ENCODE measurements at regions of chr20 and their contacts with region 1.

Region 1: DNA sequence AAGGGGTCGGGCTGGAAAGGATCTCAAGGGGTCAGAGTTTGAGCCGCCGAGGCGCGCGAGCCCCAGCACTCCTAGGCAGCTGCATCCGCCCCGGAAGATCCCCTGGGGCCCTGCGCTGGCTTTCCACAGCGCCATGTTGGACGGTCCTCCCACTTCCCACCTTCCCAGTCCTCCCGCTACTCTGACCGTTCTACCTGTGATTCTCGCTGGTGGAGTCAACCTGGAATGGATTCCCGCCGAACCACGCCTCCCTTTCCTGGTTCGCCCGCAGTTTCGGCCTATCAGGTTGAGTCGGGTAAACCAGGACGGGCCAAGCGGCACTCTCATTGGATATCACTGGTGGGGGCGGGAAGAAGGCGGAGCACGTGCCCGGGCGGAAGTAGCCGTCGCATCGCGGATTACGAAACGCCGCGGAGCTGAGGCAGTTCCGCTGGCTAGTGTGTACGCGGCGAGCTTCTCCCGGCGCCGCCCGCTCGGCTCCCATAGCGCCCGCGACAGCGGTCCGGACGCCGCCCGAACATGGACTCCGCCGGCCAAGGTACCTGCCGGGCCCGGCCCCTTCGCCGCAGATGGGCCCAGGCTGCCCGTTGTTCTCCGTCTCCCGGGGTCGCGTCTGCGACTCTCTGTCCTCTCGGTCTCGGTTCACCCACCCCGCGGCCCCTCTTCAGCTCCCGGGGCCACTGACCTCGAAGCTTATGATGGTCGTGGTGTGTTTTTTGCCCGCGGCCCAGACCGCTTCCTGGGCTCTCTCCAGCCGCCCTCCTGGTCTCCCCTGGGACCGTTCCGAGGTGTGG is at the start of gene TPD52L2:
- DNase-seq: peak; percentile 98 to 99 (median 99)
- ATAC-seq: peak; percentile 94 to 96 (median 95)
- H3K4me3 ChIP-seq: peak within 1 kb of the TSS; percentile 73 to 99 (median 82)
- H3K27ac ChIP-seq: peak within 1 kb of the TSS; percentile 86 to 98 (median 94)
- H3K4me1 ChIP-seq: peaks cover 8 to 55% (median 25%) of the 10 kb centered on the region in 12 donors
- H3K27me3 ChIP-seq: no peaks in the 10 kb centered on the region
- CTCF ChIP-seq: peak in 1 of 12 donors; percentile 3
- POLR2A ChIP-seq: peak; percentile 24 to 89
- total RNA-seq, gene TPD52L2: 65.0 to 122 (median 72.2) TPM

Region 2: DNA sequence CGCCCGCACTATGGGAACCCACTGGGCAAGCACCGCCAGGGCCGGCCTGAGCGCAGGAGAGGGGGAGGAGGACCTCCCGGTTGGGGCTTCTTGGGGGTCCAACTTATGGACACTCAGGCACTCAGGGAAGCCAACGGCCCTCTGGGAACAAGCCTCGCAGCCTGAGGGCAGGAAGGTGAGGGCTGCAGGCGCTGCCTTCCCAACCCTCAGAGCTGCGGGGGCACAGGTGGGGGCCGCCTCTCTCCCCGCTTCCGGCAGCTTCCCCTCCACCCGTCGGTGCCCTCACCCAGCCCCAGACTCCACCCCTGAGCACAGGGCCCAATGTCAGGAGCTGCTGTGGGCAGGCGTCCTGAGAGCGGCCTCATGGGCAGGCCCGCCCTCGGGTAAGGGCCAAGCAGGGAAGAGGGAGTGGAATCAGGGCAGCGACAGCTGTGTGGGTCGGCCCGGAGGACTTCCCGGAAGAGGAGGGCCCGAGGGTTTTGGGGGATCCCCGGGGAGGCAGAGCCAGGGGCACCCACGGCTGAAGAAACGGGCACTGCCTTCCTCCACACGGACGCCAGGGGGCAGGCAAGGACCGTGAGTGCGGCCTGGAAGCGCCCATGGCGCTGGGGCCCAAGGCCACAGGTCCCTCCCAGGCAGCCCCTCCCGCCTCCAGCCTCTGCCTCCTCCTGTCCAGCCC is 327.4 kb before region 1 on chr20:
- intact Hi-C with region 1: loop called in 7 of 10 experiments (anchors 2 to 10 kb)
- DNase-seq: peak; percentile 80 to 95 (median 87)
- ATAC-seq: peak; percentile 84 to 90 (median 87)
- H3K4me3 ChIP-seq: peak overlapping the region in 10 of 12 donors; percentile 15 to 51 (median 38)
- H3K27ac ChIP-seq: peak overlapping the region in 7 of 12 donors; percentile 12 to 91 (median 39)
- H3K4me1 ChIP-seq: peaks cover 0 to 28% (median 13%) of the 10 kb centered on the region in 12 donors
- H3K27me3 ChIP-seq: peaks cover 0 to 41% (median 2%) of the 10 kb centered on the region in 9 donors
- CTCF ChIP-seq: peak; percentile 94 to 98 (median 96)
- POLR2A ChIP-seq: no peak

Region 3: DNA sequence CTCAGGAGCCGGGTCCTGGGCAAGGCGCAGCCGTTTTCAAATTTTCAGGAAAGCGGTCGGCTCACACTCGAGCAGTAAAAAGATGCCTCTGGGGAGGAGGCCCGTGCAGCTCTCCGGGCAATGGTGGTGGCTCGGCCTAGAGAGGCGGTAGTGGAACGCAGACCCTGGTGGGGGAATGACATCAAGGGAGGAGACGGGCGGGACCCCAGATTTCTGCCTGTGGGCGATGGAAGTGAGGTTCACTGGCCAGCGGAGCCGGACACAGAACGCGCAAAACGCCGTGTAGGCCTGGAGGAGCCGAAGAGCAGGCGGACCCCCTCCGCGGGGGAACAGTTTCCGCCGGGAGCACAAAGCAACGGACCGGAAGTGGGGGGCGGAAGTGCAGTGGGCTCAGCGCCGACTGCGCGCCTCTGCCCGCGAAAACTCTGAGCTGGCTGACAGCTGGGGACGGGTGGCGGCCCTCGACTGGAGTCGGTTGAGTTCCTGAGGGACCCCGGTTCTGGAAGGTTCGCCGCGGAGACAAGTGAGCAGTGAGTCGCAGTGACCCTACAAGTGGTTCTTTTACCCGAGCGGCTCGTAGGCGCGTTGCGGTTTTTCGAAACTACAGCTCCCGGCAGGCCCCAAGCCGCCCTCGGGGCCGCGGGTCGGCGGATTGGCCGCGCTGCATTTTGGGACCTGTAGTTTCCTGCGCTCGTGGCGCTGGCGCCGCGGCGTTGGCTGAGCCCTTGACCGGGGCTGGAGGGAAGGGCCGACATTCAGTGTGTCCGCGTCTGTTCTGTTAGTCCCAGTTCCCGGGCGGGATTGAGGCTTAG is 206.9 kb before region 1 on chr20 and contains the start of gene RTEL1:
- intact Hi-C with region 1: loop called in 1 of 10 experiments (anchors 10 kb)
- DNase-seq: peak; percentile 94 to 96 (median 95)
- ATAC-seq: peak; percentile 91 to 97 (median 96)
- H3K4me3 ChIP-seq: peak within 1 kb of the TSS; percentile 61 to 91 (median 78)
- H3K27ac ChIP-seq: peak within 1 kb of the TSS; percentile 65 to 98 (median 89)
- H3K4me1 ChIP-seq: peaks cover 3 to 33% (median 21%) of the 10 kb centered on the region in 12 donors
- H3K27me3 ChIP-seq: peaks cover 0 to under 1% (median 0%) of the 10 kb centered on the region in 9 donors
- CTCF ChIP-seq: peak in 1 of 12 donors; percentile 10
- POLR2A ChIP-seq: peak in 1 of 2 donors; percentile 35
- total RNA-seq, gene RTEL1: 3.0 to 17.8 (median 10.1) TPM

Region 4: DNA sequence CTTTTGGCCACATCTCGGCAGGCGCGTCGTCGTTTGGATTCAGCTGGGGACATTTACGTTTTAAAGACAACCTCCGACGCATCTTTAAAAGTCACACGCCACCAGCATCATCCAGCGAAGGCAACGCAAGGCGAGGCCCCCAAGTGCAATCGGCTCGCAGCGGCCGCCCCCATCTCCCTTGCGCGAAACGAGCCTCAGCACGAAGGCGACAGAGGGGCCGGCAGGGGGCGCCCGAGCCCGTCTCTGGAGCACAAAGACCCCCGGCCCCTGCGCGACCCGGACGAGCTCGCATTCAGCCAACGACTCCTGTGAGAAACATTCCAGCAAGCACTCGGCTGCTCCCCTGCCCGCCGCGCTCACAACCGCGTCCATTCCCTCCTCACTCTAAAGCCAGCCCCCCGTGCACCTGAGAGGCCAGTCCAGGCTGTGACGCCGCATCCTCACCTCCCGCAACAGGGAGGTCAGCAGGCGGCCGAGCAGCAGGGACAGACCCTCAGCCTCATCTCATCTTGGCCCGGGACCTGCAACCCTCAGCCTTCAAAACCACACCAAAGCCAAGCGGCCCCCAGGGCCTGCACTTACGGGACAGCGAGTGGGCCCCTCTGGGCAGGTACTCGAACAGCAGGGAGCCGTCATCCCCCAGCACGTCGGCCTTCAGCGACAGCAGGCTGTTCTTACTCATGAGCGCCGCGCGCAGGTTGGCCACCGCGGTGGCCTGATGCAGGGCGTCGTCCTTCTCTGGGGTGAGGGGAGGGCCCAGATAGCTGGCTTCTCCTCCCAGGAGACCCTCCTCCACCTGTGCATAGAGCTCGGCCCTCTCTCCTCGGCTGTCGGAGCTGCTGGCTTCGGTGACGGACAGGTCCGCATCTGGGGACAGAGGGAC is 89.7 kb before region 1 on chr20:
- intact Hi-C with region 1: loop called in 1 of 10 experiments (anchors 5 kb)
- DNase-seq: peak in 2 of 5 donors; percentile 44 to 69
- ATAC-seq: peak in 1 of 4 donors; percentile 41
- H3K4me3 ChIP-seq: peak overlapping the region in 2 of 12 donors; percentile 12 to 24
- H3K27ac ChIP-seq: peak overlapping the region in 1 of 12 donors; percentile 24
- H3K4me1 ChIP-seq: peaks cover 0 to 38% (median 15%) of the 10 kb centered on the region in 12 donors
- H3K27me3 ChIP-seq: no peaks in the 10 kb centered on the region
- CTCF ChIP-seq: peak; percentile 55 to 80 (median 66)
- POLR2A ChIP-seq: no peak

Region 5: DNA sequence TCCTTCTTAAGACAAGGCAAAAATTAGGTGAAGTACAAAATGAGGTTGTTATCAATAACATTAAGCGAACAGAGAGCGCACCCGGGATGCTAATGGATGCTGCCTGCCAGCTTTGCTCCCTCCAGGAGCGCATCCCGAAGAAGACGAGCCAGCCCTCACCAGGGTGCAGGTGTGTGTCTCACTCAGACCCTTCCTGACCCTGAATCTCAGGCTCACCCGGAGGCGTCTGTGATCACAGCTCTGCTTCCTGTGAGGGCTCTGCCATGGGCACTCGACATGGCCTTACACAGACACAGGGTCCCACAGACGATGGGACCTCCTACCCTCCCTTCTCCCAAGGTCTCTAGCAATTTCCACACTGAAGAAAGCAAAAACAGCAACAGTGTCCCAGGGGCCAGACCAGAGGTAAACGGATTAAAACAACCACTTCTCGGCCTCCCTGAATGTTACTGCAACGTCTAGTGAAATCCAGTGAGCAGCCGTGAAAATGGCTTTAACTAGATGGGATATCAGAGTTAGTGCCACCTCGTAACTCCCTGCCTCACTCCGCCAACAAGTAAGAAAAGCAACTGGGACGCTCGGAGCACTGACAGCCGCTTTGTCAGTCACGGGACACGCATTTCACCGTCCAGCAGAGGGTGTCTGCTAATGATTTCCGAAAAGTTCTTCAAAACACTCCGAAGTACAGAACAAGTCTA is 45.7 kb before region 1 on chr20:
- intact Hi-C with region 1: loop called in 4 of 10 experiments (anchors 5 to 10 kb)
- DNase-seq: no peak
- ATAC-seq: peak in 3 of 4 donors; percentile 33 to 61 (median 53)
- H3K4me3 ChIP-seq: peak overlapping the region in 2 of 12 donors; percentile 2 to 32
- H3K27ac ChIP-seq: peak overlapping the region in 5 of 12 donors; percentile 11 to 50 (median 28)
- H3K4me1 ChIP-seq: peaks cover 0 to 57% (median 33%) of the 10 kb centered on the region in 12 donors
- H3K27me3 ChIP-seq: no peaks in the 10 kb centered on the region
- CTCF ChIP-seq: peak in 11 of 12 donors; percentile 15 to 57 (median 41)
- POLR2A ChIP-seq: no peak

Region 6: DNA sequence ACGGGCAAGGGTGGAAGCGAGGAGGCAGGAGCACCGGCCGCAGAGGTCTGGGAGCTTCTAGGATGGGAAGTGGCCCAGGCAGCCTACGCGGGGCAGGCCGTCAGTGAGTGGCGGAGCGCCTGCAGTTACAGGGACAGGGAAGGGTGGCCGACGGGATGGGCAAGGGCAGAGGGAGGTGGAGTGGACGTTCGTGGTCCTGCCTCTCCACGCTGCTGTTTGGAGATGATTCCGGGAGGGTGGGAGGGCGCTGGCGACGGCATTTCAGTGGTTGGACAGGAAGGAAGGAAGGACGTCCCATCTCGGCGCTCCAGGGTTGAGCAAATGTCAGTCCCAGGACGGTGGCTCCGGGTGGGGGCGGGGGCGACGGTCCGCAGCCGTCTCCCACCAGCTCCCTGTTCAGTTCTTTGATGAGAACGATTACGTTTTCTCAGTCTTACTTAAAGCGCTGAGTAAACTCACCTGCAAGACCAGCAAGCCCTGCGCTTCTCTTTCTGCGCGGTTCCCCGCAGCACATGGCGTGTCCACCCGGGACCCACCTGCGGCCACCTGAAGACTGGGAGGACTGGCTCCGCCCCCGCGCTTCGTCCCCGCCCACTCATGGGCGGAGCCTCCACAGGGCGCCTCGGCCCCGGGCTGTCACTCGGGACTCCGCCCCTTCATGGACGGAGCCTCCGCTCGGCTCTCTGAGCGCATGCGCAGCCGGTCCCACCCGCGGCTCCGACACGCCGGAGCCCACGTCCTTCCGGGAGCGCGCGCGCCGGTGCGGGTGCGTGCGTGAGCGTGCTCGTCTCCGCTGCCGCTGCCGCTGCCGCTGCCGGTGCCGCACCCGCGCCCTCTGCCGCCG is 29.5 kb after region 1 on chr20 and contains the start of gene DNAJC5:
- intact Hi-C with region 1: loop called in 2 of 10 experiments (anchors 1 to 2 kb)
- DNase-seq: peak; percentile 96 to 99 (median 97)
- ATAC-seq: peak; percentile 93 to 96 (median 95)
- H3K4me3 ChIP-seq: peak within 1 kb of the TSS; percentile 30 to 80 (median 68)
- H3K27ac ChIP-seq: peak within 1 kb of the TSS; percentile 42 to 96 (median 82)
- H3K4me1 ChIP-seq: peaks cover 9 to 50% (median 35%) of the 10 kb centered on the region in 12 donors
- H3K27me3 ChIP-seq: no peaks in the 10 kb centered on the region
- CTCF ChIP-seq: no peak
- POLR2A ChIP-seq: peak in 1 of 2 donors; percentile 52
- total RNA-seq, gene DNAJC5: 34.8 to 57.1 (median 46.1) TPM